ENCODE measurements at regions of chr1 and their contacts with region 1.

Region 1: GRCh38 chr1:43073490-43074230 is 98.4 kb downstream of the EBNA1BP2 start:
- DNase-seq: peak; percentile 79
- ATAC-seq: peak; percentile 73
- H3K4me3 Mint-ChIP-seq: no peak overlapping the region
- H3K27ac Mint-ChIP-seq: peak overlapping the region; percentile 92; the same call in 1 of the 2 replicates
- H3K4me1 Mint-ChIP-seq: peaks cover 50% of the 10 kb centered on the region
- H3K27me3 Mint-ChIP-seq: peaks cover 4% of the 10 kb centered on the region
- CTCF ChIP-seq: peak; percentile 96

Region 2: GRCh38 chr1:42529724-42530181 is 543.9 kb before region 1 on chr1:
- CTCF ChIA-PET with region 1: no interaction called
- POLR2A ChIA-PET with region 1: no interaction called
- DNase-seq: no peak
- ATAC-seq: no peak
- H3K4me3 Mint-ChIP-seq: no peak overlapping the region
- H3K27ac Mint-ChIP-seq: no peak overlapping the region
- H3K4me1 Mint-ChIP-seq: peaks cover 8% of the 10 kb centered on the region
- H3K27me3 Mint-ChIP-seq: no peaks in the 10 kb centered on the region
- CTCF ChIP-seq: no peak

Region 3: GRCh38 chr1:42766741-42767509 is 306.7 kb before region 1 on chr1 and contains the starts of genes C1orf50 and P3H1:
- CTCF ChIA-PET with region 1: interaction called, 16 read pairs
- POLR2A ChIA-PET with region 1: no interaction called
- DNase-seq: peak; percentile 100
- ATAC-seq: peak; percentile 91
- H3K4me3 Mint-ChIP-seq: no peak within 1 kb of the TSS; the same call in 1 of the 2 replicates
- H3K27ac Mint-ChIP-seq: peak within 1 kb of the TSS; percentile 86
- H3K4me1 Mint-ChIP-seq: peaks cover 12% of the 10 kb centered on the region
- H3K27me3 Mint-ChIP-seq: no peaks in the 10 kb centered on the region
- CTCF ChIP-seq: no peak
- total RNA-seq, gene C1orf50: 5.1 to 6.3 TPM (median 5.3 TPM) in 3 replicates
- total RNA-seq, gene P3H1: 78.1 to 95.1 TPM (median 80.3 TPM) in 3 replicates

Region 4: GRCh38 chr1:42846257-42847110 is 227.2 kb before region 1 on chr1 and contains the start of gene ZNF691:
- CTCF ChIA-PET with region 1: interaction called, 21 read pairs
- POLR2A ChIA-PET with region 1: no interaction called
- DNase-seq: peak; percentile 94
- ATAC-seq: peak; percentile 99
- H3K4me3 Mint-ChIP-seq: peak within 1 kb of the TSS; percentile 95
- H3K27ac Mint-ChIP-seq: peak within 1 kb of the TSS; percentile 90
- H3K4me1 Mint-ChIP-seq: peaks cover 24% of the 10 kb centered on the region
- H3K27me3 Mint-ChIP-seq: no peaks in the 10 kb centered on the region; the same call in 1 of the 2 replicates
- CTCF ChIP-seq: no peak
- total RNA-seq, gene ZNF691: 16.6 to 18.5 TPM (median 18.0 TPM) in 3 replicates

Region 5: DNA sequence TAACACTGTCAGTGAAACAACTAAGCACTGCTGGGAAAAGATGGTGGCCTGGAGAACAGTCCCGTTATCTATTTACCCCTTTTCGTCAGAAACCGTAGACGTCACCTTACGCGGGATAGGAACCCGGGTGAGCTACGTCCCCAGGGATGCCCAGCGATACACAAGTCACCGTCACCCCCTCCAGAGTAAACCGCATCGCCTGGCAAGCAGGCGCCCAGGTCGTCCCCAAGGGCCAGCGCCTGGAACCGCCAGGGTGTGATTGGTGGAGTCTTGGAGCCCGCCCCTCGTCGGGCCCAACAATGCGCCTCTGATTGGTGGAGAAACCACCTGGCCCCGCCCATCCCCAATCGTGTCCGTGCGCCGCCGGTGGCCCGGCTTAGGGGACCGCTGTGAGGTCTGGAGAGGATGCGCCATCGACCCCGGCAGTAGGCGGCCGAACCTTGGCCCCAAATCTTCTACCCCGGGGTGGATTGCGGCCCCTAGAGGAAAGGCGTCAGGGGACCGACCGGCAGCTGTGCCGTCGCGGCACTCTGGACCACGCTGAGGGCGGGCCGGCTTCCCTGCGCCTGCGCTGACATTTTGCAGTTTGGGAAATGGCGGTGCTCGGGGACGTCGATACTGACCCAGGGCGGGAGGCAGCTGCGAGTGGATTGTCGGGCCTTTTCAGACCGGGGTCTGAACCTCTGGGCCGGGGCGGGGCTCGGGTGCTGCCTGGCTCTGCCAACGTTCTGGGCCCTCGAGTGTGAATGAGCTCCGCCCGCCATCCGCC is 149.4 kb before region 1 on chr1:
- CTCF ChIA-PET with region 1: interaction called, 119 read pairs
- POLR2A ChIA-PET with region 1: interaction called, 4 read pairs
- DNase-seq: peak; percentile 97
- ATAC-seq: peak; percentile 84
- H3K4me3 Mint-ChIP-seq: peak overlapping the region; percentile 81
- H3K27ac Mint-ChIP-seq: peak overlapping the region; percentile 95
- H3K4me1 Mint-ChIP-seq: peaks cover 52% of the 10 kb centered on the region
- H3K27me3 Mint-ChIP-seq: no peaks in the 10 kb centered on the region
- CTCF ChIP-seq: no peak

Region 6: DNA sequence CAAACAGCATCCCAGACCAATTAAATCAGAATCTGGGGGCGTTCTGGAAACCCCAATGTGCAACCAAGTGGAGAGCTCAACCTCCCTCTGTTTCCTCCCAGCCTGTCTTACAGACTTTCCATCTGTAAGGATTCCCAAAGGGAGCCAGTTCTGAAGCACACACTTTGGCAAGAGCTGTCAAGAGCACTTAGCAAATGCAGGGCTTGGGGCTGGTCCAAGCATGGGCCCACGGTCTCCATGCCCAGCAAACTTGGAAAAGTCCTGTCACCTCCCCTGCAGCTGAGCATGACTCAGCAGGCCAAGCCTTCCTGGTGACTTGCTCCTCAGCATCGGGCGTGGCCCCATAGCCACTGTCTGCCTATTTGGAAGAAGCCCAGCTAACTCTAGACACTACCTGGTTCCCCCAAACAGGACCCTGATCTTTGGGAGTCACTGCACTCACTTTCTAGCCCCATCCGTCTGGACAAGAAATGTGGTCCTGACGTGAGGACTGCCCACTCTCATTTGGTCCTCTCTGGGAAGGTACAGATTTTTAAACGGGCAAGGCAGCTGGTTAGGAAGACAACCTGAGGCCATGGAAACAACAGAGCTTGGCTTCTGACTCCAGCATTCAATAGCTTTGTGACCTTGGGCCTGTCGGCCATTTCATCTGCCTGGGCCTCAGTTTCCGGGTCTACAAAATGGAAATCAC is 131.9 kb before region 1 on chr1:
- CTCF ChIA-PET with region 1: interaction called, 46 read pairs
- POLR2A ChIA-PET with region 1: no interaction called
- DNase-seq: no peak
- ATAC-seq: no peak
- H3K4me3 Mint-ChIP-seq: no peak overlapping the region
- H3K27ac Mint-ChIP-seq: peak overlapping the region; percentile 91
- H3K4me1 Mint-ChIP-seq: peaks cover 91% of the 10 kb centered on the region
- H3K27me3 Mint-ChIP-seq: no peaks in the 10 kb centered on the region
- CTCF ChIP-seq: no peak

Region 7: GRCh38 chr1:43008115-43009060 is 65.3 kb before region 1 on chr1:
- CTCF ChIA-PET with region 1: interaction called, 26 read pairs
- POLR2A ChIA-PET with region 1: no interaction called
- DNase-seq: peak; percentile 97
- ATAC-seq: peak; percentile 85
- H3K4me3 Mint-ChIP-seq: peak overlapping the region; percentile 61
- H3K27ac Mint-ChIP-seq: peak overlapping the region; percentile 100
- H3K4me1 Mint-ChIP-seq: peaks cover 66% of the 10 kb centered on the region
- H3K27me3 Mint-ChIP-seq: no peaks in the 10 kb centered on the region
- CTCF ChIP-seq: no peak

Region 8: DNA sequence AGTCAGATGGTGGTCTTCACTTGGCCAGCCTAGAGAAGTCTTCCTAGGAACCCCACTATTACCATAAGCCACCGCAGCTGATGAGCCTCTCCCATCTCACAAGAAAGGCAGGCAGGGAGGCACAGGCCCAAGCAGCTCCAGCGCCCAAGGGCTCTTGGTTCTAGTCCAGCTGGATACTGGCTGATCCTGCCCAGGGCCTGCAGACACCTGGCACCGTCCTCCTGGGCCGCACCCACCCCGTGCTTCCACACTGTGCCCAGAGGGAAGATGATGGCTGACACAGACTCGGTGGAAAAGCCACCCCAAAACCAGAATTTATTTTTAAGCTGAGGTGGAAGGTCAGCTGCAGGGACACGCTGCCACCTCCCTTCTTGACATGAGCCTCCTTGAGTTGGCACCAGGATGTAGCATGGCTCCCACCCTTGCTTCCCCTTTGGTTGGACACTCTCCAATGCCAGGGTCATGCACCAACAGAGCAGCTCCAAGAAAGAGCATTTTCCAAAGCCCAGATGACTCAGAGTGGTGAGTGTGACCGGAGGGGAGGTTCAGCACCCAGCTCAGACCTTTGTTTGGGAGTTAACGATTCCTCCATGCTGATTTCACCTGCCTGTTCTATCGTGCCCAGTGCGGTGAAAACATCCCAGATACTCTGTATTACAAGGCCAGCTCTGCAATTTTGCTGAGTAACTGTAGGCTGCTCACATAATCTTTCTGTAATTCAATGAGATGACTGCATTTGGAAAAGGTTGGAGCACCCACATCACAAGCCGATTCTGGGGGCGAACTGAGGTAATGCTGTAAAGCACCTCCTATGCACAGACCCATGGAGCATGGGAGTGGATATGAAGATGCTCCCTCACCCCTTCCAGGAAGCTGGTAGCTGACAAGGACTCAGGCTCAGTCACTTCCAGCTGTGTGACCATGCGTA is 51.8 kb before region 1 on chr1:
- CTCF ChIA-PET with region 1: no interaction called
- POLR2A ChIA-PET with region 1: no interaction called
- DNase-seq: no peak
- ATAC-seq: no peak
- H3K4me3 Mint-ChIP-seq: no peak overlapping the region
- H3K27ac Mint-ChIP-seq: no peak overlapping the region
- H3K4me1 Mint-ChIP-seq: no peaks in the 10 kb centered on the region
- H3K27me3 Mint-ChIP-seq: peaks cover 5% of the 10 kb centered on the region; the same call in 1 of the 2 replicates
- CTCF ChIP-seq: no peak

Region 9: DNA sequence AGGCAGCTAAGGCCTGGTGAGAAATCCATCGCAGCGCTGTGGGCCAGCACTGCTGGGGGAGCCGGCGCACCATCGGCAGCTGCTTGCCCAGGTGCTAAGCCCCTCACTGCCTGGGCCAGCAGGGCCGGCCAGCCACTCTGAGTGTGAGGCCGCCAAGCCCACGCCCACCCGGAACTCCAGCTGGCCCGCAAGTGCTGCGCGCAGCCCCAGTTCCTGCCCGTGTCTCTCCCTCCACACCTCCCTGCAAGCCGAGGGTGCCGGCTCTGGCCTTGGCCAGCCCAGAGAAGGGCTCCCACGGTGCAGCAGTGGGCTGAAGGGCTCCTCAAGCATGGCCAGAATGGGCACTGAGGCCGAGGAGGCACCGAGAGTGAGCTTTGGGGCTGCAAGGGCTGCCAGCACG is 34.0 kb after region 1 on chr1:
- CTCF ChIA-PET with region 1: no interaction called
- POLR2A ChIA-PET with region 1: no interaction called
- DNase-seq: no peak
- ATAC-seq: no peak
- H3K4me3 Mint-ChIP-seq: no peak overlapping the region
- H3K27ac Mint-ChIP-seq: no peak overlapping the region
- H3K4me1 Mint-ChIP-seq: no peaks in the 10 kb centered on the region
- H3K27me3 Mint-ChIP-seq: peaks cover 12% of the 10 kb centered on the region
- CTCF ChIP-seq: no peak